Posterior vena cava (tissue), 2 donors: ENCODE measurements at regions of chr9 and their contacts with region 1.

Region 1: DNA sequence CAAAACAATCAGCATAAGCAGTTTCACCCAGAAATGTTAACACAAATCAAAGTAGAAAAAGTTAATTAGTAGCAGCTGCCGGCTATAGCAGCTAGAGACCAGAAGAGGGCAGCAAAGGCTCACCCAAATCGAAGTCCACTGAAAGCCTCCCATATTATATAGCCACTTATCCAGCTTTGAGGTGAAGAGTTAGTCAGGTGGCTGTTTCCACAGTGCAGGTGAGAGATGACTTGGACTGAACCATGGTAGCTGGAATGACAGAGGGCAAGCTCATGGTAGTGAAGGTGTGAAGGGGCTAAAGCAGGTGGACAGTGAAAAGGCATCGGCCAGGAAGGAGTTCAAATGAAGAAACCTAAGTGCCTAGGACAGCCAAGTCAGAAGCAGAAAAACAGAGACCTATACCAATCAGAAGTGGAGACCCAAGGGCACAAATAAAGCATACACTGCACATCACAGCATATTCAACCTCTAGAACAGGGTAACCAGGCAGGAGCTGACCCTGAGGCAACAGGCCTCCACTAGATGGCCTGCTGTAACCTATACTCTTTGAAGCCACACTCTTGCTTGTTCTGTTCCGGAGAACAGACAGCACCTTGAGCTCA is 7.2 kb upstream of the RNF38 start:
- DNase-seq: no peak

Region 2: DNA sequence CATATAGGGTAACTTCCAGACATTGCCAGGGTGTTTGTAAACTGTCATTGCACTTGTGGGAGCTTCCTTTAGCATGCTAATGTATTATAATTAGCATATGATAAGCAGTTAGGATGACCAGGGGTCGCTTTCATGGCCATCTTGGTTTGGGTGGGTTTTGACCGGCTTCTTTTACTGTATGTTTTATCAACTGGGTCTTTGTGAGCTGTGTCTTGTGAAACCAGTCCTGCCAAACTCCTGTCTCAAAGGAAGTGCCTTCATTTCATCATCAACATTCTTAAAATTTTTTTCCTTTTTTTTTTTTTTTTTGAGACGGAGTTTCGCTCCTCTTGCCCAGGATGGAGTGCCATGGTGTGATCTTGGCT is 153.6 kb after region 1 on chr9:
- intact Hi-C with region 1: loop called (anchors 2 to 5 kb)
- DNase-seq: no peak